ENCODE measurements at regions of chr6 and their contacts with region 1.

Region 1: GRCh38 chr6:7282097-7282906 is 30.7 kb downstream of the SSR1 start:
- DNase-seq: no peak
- H3K4me3 ChIP-seq: no peak overlapping the region
- H3K27ac ChIP-seq: no peak overlapping the region
- H3K4me1 ChIP-seq: peaks cover 0 to 3% (median 0%) of the 10 kb centered on the region in 4 donors
- H3K27me3 ChIP-seq: no peaks in the 10 kb centered on the region
- CTCF ChIP-seq: no peak
- EP300 ChIP-seq: no peak
- POLR2A ChIP-seq: no peak

Region 2: DNA sequence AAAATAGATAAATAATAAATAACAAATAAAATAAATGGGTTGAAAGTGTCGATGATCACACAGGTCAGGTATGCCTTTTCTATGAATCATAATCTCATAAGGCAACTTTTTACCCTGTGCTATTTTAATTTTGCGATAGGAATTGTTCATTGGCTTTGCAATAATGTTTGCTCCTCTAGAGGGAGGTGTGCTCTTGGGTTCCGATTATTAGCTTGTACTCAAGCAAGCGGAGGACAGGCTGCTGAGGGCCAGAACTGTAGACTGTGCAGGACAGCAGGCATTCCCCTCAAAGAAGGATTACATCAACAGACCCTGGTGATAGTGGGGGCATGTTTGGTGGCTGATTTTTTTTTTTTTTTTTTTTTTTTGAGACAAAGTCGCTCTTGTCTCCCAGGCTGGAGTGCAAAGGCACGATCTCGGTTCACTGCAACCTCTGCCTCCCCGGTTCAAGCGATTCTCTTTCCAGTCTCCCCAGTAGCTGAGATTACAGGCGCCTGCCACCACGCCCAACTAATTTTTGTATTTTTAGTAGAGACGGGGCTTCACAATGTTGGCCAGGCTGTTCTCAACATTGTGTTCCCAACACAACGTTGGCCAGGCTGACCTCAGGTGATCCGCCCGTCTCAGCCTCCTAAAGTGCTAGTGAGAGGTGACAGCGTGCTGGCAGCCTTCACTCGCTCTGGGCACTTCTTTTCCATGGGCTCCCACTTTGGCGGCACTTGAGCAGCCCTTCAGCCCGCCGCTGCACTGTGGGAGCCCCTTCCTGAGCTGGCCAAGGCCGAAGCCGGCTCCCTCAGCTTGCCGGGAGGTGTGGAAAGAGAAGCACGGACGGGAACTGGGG is 142.9 kb after region 1 on chr6:
- in situ Hi-C with region 1: loop called in 1 of 4 experiments (anchors 25 kb)
- intact Hi-C with region 1: no loop called
- DNase-seq: no peak
- H3K4me3 ChIP-seq: no peak overlapping the region
- H3K27ac ChIP-seq: no peak overlapping the region
- H3K4me1 ChIP-seq: no peaks in the 10 kb centered on the region
- H3K27me3 ChIP-seq: no peaks in the 10 kb centered on the region
- CTCF ChIP-seq: peak; percentile 32 to 73 (median 54)
- EP300 ChIP-seq: no peak
- POLR2A ChIP-seq: no peak

Measured in transverse colon (tissue), 4 donors.